A549 (cell line): ENCODE measurements at regions of chr14 and their contacts with region 1.

Region 1: GRCh38 chr14:23320774-23321571 is at the start of gene PABPN1:
- DNase-seq: peak; percentile 98 to 100
- ATAC-seq: peak; percentile 90 to 96
- H3K4me3 ChIP-seq: peak within 1 kb of the TSS; percentile 97
- H3K27ac ChIP-seq: peak within 1 kb of the TSS; percentile 99 to 100
- H3K4me1 ChIP-seq: peaks cover 24% of the 10 kb centered on the region
- CTCF ChIP-seq: no peak
- EP300 ChIP-seq: no peak
- POLR2A ChIP-seq: no peak
- RAD21 ChIP-seq: no peak
- polyA plus RNA-seq, gene PABPN1: 197 and 234 TPM in 2 replicates

Region 2: GRCh38 chr14:23095196-23096108 is 225.5 kb before region 1 on chr14 and contains the start of gene C14orf119:
- CTCF ChIA-PET with region 1: no interaction called
- POLR2A ChIA-PET with region 1: interaction called, 13 read pairs
- DNase-seq: peak; percentile 98
- ATAC-seq: peak; percentile 90 to 93
- H3K4me3 ChIP-seq: peak within 1 kb of the TSS; percentile 62
- H3K27ac ChIP-seq: peak within 1 kb of the TSS; percentile 89 to 97
- H3K4me1 ChIP-seq: peaks cover 23% of the 10 kb centered on the region
- CTCF ChIP-seq: no peak
- EP300 ChIP-seq: no peak
- POLR2A ChIP-seq: peak; percentile 81
- RAD21 ChIP-seq: no peak
- polyA plus RNA-seq, gene C14orf119: 82.5 and 107 TPM in 2 replicates

Region 3: DNA sequence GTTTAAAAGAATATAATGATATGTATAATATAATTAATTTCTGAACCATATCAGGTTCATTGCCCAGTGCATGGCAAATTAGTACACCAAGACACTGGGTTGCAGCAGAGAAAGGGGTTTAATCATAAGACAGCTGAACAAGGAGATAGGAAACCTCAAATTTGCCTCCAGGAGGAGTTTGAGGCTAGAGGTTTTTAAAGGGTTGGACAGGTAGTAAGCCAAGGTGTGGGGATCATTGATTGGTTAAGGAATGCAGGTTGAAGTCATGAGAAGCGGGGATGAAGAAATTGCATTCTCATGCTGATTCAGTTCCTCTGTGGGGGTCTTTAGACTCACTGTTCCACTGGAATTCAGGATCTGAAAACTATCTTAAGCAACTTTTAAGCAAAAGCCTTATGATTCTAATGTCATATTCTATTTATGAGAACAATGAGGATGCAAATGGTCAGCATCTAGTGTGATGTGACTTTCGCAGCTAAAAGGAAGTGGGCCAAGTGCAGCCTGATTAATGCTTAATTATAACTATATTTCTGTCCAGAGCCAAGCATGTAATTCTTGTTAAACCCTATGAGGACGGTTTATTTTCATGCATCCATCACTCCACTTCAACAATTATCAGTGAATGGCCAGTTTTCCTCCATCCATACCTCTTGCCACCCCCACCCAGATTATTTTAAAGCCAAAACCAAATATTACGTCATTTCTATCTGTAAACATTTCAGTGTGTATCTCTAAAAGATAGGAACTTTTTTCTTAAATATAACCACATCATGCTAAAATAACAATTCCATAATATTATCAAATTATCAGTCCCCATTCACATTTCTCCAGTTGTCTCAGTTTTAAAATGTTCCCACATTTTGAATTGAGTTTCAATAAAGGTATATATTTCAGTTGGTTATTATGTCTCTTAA is 68.3 kb before region 1 on chr14:
- CTCF ChIA-PET with region 1: no interaction called
- POLR2A ChIA-PET with region 1: no interaction called
- DNase-seq: no peak
- ATAC-seq: no peak
- H3K4me3 ChIP-seq: no peak overlapping the region
- H3K27ac ChIP-seq: no peak overlapping the region
- H3K4me1 ChIP-seq: no peaks in the 10 kb centered on the region
- CTCF ChIP-seq: no peak
- EP300 ChIP-seq: no peak
- POLR2A ChIP-seq: no peak
- RAD21 ChIP-seq: no peak

Region 4: DNA sequence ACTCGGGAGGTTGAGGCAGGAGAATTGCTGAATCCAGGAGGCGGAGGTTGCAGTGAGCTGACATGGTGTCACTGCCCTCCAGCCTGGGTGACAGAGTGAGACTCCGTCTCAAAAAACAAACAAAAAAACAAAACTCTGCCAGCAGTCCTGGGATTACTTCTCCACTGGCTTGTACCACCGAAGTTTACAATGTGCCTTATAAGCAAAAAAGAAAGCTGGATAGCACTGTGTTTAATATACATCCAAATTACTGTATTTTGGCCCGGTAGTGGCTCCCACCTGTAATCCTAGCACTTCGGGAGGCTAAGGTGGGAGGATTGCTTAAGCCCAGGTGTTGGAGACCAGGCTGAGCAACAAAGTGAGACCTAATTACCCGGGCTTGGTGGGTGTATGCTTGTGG is 51.8 kb before region 1 on chr14:
- CTCF ChIA-PET with region 1: interaction called, 10 read pairs
- POLR2A ChIA-PET with region 1: interaction called, 4 read pairs
- DNase-seq: no peak
- ATAC-seq: no peak
- H3K4me3 ChIP-seq: no peak overlapping the region
- H3K27ac ChIP-seq: no peak overlapping the region
- H3K4me1 ChIP-seq: no peaks in the 10 kb centered on the region
- CTCF ChIP-seq: no peak
- EP300 ChIP-seq: no peak
- POLR2A ChIP-seq: no peak
- RAD21 ChIP-seq: no peak

Region 5: GRCh38 chr14:23286020-23286905 is 34.7 kb before region 1 on chr14 and contains the start of gene HOMEZ:
- CTCF ChIA-PET with region 1: no interaction called
- POLR2A ChIA-PET with region 1: interaction called, 15 read pairs
- DNase-seq: peak; percentile 98
- ATAC-seq: peak; percentile 98 to 99
- H3K4me3 ChIP-seq: peak within 1 kb of the TSS; percentile 96
- H3K27ac ChIP-seq: peak within 1 kb of the TSS; percentile 95
- H3K4me1 ChIP-seq: peaks cover 18% of the 10 kb centered on the region
- CTCF ChIP-seq: no peak
- EP300 ChIP-seq: no peak
- POLR2A ChIP-seq: peak; percentile 61
- RAD21 ChIP-seq: no peak
- polyA plus RNA-seq, gene HOMEZ: 9.2 and 11.7 TPM in 2 replicates

Region 6: DNA sequence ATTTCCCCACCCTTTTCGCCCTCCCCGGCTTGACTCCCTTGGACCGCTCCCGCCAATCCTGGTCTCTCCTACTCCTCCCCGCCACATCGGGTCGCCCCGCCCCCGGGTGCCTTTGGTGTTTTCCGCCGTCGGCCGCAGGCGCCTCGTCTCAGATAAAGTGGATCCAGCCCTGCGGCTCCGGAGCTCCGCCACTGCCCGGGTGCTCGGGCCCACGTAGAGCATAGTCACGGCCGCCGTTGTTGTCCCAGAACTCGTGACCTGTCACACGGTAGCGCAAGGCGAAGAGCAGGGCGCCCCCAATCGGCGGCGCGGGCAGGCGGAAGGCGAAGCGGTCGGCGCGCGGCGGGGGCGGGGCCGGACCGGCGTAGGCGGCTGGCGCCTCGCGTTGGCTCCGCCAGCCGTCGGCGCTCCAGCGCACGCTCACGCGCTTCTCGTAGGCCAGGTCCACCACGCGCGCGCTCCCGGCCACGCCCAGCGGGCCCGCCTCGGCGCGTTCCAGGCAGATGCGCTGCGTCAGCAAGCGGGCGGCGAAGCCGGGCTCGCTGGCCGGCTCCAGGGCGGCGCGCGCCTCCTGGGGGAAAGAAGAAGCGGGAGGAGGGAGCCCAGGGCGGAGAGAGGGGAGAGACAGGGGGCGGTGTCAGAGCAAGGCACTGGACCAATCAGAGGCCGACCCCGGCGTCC is 19.5 kb before region 1 on chr14:
- CTCF ChIA-PET with region 1: interaction called, 22 read pairs
- POLR2A ChIA-PET with region 1: interaction called, 64 read pairs
- DNase-seq: peak; percentile 96 to 97
- ATAC-seq: peak; percentile 82 to 89
- H3K4me3 ChIP-seq: peak overlapping the region; percentile 63
- H3K27ac ChIP-seq: peak overlapping the region; percentile 92
- H3K4me1 ChIP-seq: peaks cover 23% of the 10 kb centered on the region
- CTCF ChIP-seq: peak; percentile 92
- EP300 ChIP-seq: no peak
- POLR2A ChIP-seq: peak; percentile 45
- RAD21 ChIP-seq: no peak; a peak in 2 of 5 replicates

Region 7: DNA sequence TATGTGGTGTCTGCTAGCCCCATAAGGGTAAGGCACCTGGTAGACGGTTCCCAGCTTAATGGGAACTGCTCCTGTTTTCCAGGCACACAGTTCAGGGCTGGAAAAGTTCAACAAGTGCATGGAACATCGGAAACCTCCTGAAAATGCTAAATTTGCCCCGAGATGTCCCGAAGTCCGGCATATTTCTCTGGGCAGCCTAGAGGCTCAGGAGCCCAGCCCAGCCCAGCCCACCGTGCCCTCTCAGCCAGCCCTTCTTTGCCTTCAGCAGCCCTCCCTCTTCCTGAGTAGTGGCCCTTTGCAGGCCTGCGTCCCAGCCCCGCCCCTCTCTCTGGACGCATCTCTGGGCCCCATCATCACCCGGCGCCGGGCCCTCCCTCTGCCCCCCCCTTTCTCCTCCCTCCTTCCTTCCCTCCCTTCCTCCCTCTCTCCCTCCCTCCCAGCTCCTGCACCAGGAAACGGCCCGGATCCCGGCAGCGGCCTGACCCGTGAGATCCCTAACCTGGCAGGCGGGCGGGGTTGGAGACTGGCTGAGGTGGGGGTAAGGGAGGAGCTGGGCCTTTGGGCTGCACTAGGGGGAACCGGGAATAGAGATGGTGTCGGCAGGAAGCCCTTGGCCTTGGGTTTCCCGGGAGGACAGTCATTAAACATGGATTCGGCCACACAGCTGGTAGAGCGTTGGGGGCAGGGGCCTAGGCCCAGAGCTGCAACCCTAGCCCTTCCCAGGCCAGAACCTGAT is 14.4 kb before region 1 on chr14 and contains the start of gene BCL2L2:
- CTCF ChIA-PET with region 1: interaction called, 22 read pairs
- POLR2A ChIA-PET with region 1: interaction called, 64 read pairs
- DNase-seq: peak; percentile 66 to 92
- ATAC-seq: peak; percentile 66 to 78
- H3K4me3 ChIP-seq: peak within 1 kb of the TSS; percentile 74
- H3K27ac ChIP-seq: peak within 1 kb of the TSS; percentile 95 to 96
- H3K4me1 ChIP-seq: peaks cover 29% of the 10 kb centered on the region
- CTCF ChIP-seq: no peak
- EP300 ChIP-seq: no peak
- POLR2A ChIP-seq: peak; percentile 71
- RAD21 ChIP-seq: no peak
- polyA plus RNA-seq, gene BCL2L2: 17.8 and 20.8 TPM in 2 replicates

Region 8: DNA sequence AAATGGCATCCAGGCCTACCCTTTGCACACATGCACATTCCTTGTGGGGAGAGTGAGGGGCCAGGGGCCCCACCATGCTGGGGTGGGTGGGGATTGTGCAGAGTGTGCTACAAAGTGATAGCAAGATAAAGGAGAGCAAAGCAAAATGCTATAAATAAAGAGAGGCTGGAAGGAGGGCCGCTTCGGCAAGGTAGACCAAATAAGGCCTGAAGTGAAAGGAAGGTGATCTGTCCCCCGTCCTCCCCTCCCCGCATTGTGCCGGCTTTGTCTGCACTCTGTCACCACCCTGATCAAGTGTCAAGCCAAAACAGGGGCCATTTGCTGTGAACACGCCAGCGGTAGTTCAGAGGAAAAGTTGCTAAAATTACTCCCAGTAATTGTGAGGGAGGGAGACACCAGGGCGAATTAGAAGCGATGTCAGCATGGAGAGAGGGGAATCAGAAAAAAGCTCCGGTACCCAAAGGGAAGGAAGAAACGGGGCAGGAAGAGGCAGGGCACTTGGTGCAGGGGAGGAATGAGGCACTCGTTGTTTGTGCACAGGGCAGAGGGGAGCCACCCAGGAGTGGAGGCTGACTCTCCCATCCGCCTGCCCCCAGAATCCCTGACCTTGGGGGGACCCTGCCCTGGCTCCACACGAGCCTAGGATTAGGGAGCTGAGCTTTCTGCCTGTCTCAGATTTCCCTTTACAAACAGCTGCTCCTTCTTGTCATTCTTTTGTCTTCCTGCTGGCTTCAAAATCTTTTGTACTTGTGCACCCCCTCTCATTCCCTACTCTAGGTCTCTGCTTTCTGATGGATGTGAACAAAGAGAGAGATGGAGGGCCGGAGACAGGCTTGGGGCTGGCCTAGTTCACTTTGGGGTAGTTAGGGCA is 117.4 kb after region 1 on chr14:
- CTCF ChIA-PET with region 1: no interaction called
- POLR2A ChIA-PET with region 1: no interaction called
- DNase-seq: no peak
- ATAC-seq: no peak
- H3K4me3 ChIP-seq: no peak overlapping the region
- H3K27ac ChIP-seq: no peak overlapping the region
- H3K4me1 ChIP-seq: no peaks in the 10 kb centered on the region
- CTCF ChIP-seq: no peak
- EP300 ChIP-seq: no peak
- POLR2A ChIP-seq: no peak
- RAD21 ChIP-seq: no peak

Region 9: DNA sequence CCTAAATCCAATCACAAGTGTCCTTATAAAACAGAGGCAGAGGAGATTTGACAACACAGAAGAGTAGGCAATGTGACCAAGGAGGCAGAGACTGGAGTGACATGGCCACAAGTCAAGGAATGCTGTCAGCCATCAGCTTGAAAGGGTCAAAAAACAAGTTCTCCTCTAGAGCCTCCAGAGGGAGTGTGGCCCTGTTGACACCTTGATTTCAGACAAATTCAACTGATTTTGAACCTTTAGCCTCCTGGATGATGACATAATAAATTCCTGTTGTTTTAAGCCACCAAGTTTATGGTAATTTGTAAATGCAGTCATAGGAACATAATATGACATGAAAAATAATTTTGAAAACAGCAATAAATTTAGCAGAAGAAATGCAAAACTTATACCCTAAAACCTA is 140.0 kb after region 1 on chr14:
- CTCF ChIA-PET with region 1: no interaction called
- POLR2A ChIA-PET with region 1: no interaction called
- DNase-seq: peak in 1 of 2 experiments; percentile 21
- ATAC-seq: no peak
- H3K4me3 ChIP-seq: no peak overlapping the region
- H3K27ac ChIP-seq: no peak overlapping the region
- H3K4me1 ChIP-seq: peaks cover 7% of the 10 kb centered on the region; the same call in 2 of the 3 replicates
- CTCF ChIP-seq: no peak
- EP300 ChIP-seq: no peak
- POLR2A ChIP-seq: no peak
- RAD21 ChIP-seq: no peak